Mammary epithelial cell (primary cell): ENCODE measurements at regions of chr1 and their contacts with region 1.

Region 1: DNA sequence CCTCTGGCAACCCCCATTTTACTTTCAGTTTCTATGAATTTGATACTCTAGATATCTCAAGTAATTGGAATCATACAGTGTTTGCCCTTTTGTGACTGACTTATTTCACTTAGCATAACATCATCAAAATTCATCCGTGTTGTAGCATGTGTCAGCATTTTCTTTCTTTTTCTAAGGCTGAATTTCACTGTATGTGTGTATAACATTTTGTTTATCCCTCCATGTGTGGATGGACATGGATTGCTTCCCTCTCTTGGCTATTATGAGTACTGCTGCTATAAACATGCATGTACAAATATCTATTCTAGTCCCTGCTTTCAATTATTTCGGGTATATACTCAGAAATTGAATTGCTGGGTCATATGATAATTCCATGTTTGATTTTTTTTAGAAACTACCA is 97.3 kb downstream of the MAP3K21 start:
- DNase-seq: no peak
- H3K4me3 ChIP-seq: no peak overlapping the region
- H3K27ac ChIP-seq: no peak overlapping the region
- H3K4me1 ChIP-seq: no peaks in the 10 kb centered on the region
- H3K27me3 ChIP-seq: peaks cover 7% of the 10 kb centered on the region
- CTCF ChIP-seq: peak; percentile 32 to 52

Region 2: GRCh38 chr1:233025157-233025915 is 399.4 kb before region 1 on chr1:
- CTCF ChIA-PET with region 1: no interaction called
- dilution Hi-C with region 1: no loop called
- in situ Hi-C with region 1: no loop called
- intact Hi-C with region 1: no loop called
- DNase-seq: peak; percentile 82
- H3K4me3 ChIP-seq: no peak overlapping the region
- H3K27ac ChIP-seq: no peak overlapping the region
- H3K4me1 ChIP-seq: peaks cover 17% of the 10 kb centered on the region
- H3K27me3 ChIP-seq: no peaks in the 10 kb centered on the region
- CTCF ChIP-seq: peak in 1 of 2 donors; percentile 11

Region 3: GRCh38 chr1:233394860-233395717 is 29.7 kb before region 1 on chr1:
- CTCF ChIA-PET with region 1: no interaction called
- dilution Hi-C with region 1: no loop called
- in situ Hi-C with region 1: no loop called
- intact Hi-C with region 1: loop called (anchors 1 kb)
- DNase-seq: peak; percentile 43
- H3K4me3 ChIP-seq: no peak overlapping the region
- H3K27ac ChIP-seq: no peak overlapping the region
- H3K4me1 ChIP-seq: no peaks in the 10 kb centered on the region
- H3K27me3 ChIP-seq: peaks cover 1% of the 10 kb centered on the region
- CTCF ChIP-seq: peak; percentile 83 to 89